ENCODE measurements at regions of chr1 and their contacts with region 1.

Region 1: GRCh38 chr1:27284425-27285273 is 37.3 kb upstream of the TMEM222 start:
- DNase-seq: peak; percentile 45
- ATAC-seq: peak; percentile 98
- H3K4me3 ChIP-seq: no peak overlapping the region
- H3K27ac ChIP-seq: no peak overlapping the region
- H3K4me1 ChIP-seq: no peaks in the 10 kb centered on the region
- H3K27me3 ChIP-seq: no peaks in the 10 kb centered on the region
- CTCF ChIP-seq: peak; percentile 71 to 87 (median 85)
- POLR2A ChIP-seq: no peak
- RAD21 ChIP-seq: peak; percentile 83

Region 2: GRCh38 chr1:27102707-27103491 is 181.8 kb before region 1 on chr1:
- CTCF ChIA-PET with region 1: interaction called, 31 read pairs
- POLR2A ChIA-PET with region 1: no interaction called
- RAD21 ChIA-PET with region 1: interaction called in 1 of 2 experiments, 3 read pairs
- intact Hi-C with region 1: loop called (anchors 1 kb)
- DNase-seq: no peak
- ATAC-seq: peak; percentile 83
- H3K4me3 ChIP-seq: no peak overlapping the region
- H3K27ac ChIP-seq: no peak overlapping the region
- H3K4me1 ChIP-seq: peaks cover 9 to 42% of the 10 kb centered on the region in 2 experiments
- H3K27me3 ChIP-seq: no peaks in the 10 kb centered on the region
- CTCF ChIP-seq: peak; percentile 91 to 96 (median 95)
- POLR2A ChIP-seq: no peak
- RAD21 ChIP-seq: peak; percentile 97

Region 3: GRCh38 chr1:27201295-27201694 is 83.4 kb before region 1 on chr1:
- CTCF ChIA-PET with region 1: interaction called, 5 read pairs
- POLR2A ChIA-PET with region 1: no interaction called
- RAD21 ChIA-PET with region 1: no interaction called
- intact Hi-C with region 1: loop called (anchors 1 kb)
- DNase-seq: no peak
- ATAC-seq: no peak
- H3K4me3 ChIP-seq: no peak overlapping the region
- H3K27ac ChIP-seq: no peak overlapping the region
- H3K4me1 ChIP-seq: peaks cover 0 to 8% of the 10 kb centered on the region in 2 experiments; a peak in 2 of 4 replicates
- H3K27me3 ChIP-seq: no peaks in the 10 kb centered on the region
- CTCF ChIP-seq: no peak
- POLR2A ChIP-seq: no peak
- RAD21 ChIP-seq: no peak

Region 4: GRCh38 chr1:28613175-28613574 is 1328.5 kb after region 1 on chr1:
- CTCF ChIA-PET with region 1: no interaction called
- POLR2A ChIA-PET with region 1: no interaction called
- RAD21 ChIA-PET with region 1: no interaction called
- intact Hi-C with region 1: no loop called
- DNase-seq: no peak
- ATAC-seq: no peak
- H3K4me3 ChIP-seq: no peak overlapping the region
- H3K27ac ChIP-seq: no peak overlapping the region
- H3K4me1 ChIP-seq: no peaks in the 10 kb centered on the region
- H3K27me3 ChIP-seq: no peaks in the 10 kb centered on the region
- CTCF ChIP-seq: no peak
- POLR2A ChIP-seq: no peak
- RAD21 ChIP-seq: no peak